Mammary epithelial cell (primary cell): ENCODE measurements at regions of chr3 and their contacts with region 1.

Region 1: GRCh38 chr3:49327485-49327884 is 12.4 kb downstream of the USP4 start:
- DNase-seq: no peak
- H3K4me3 ChIP-seq: no peak overlapping the region
- H3K27ac ChIP-seq: no peak overlapping the region
- H3K4me1 ChIP-seq: peaks cover 4% of the 10 kb centered on the region
- H3K27me3 ChIP-seq: no peaks in the 10 kb centered on the region
- CTCF ChIP-seq: peak; percentile 36 to 40

Region 2: GRCh38 chr3:49255112-49255511 is 72.4 kb before region 1 on chr3:
- CTCF ChIA-PET with region 1: no interaction called
- dilution Hi-C with region 1: loop called (anchors 5 kb)
- in situ Hi-C with region 1: no loop called
- intact Hi-C with region 1: no loop called
- DNase-seq: peak; percentile 21
- H3K4me3 ChIP-seq: no peak overlapping the region
- H3K27ac ChIP-seq: no peak overlapping the region
- H3K4me1 ChIP-seq: no peaks in the 10 kb centered on the region
- H3K27me3 ChIP-seq: no peaks in the 10 kb centered on the region
- CTCF ChIP-seq: no peak

Region 3: DNA sequence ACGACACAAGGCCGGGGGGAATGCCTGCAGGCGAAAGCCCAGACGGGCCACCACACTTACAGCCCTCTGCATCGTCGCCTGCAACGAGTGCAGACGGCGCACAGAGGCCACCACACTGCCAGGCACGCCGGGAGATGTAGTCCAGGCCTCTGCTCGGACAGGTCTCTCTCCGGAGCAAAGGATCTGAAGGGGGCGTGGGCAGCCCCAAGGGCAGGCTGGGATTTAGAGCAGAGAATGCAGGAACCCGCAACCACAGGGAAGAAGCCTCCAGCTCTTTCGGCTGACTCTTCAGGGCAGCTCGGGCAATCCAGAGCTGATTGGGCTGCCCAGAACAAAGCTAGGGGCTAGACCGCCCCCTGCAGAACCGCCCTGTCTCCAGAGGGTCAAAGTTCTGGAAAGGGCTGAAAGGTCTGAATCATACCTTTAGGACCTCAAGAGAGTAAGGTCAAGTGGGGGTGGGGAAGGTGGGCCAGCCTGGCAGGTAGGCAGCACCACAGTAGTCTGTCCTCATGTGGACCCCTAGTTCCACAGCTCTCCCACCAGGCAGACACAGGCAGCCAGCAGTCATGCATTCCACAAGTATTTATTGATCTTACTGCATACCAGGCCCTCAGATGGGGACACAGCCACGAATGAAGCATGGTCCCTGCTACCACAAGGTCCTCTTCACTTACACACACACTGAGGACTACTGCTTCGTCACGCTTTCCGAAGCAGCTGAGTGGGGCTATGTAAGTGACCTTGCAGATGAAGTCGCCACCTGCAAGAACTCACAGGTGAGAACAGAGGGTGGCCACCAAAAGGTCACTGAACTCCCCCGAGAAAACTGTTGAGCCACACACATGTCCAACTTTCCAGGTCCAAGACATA is 95.1 kb after region 1 on chr3 and contains the start of gene AMT:
- CTCF ChIA-PET with region 1: no interaction called
- dilution Hi-C with region 1: loop called (anchors 10 kb)
- in situ Hi-C with region 1: no loop called
- intact Hi-C with region 1: no loop called
- DNase-seq: no peak
- H3K4me3 ChIP-seq: no peak within 1 kb of the TSS
- H3K27ac ChIP-seq: no peak within 1 kb of the TSS
- H3K4me1 ChIP-seq: peaks cover 21% of the 10 kb centered on the region
- H3K27me3 ChIP-seq: no peaks in the 10 kb centered on the region
- CTCF ChIP-seq: no peak
- total RNA-seq, gene AMT: 1.2 to 3.8 TPM